Activated T-helper 1 cell treated with anti-CD3 and anti-CD28 coated beads, Interleukin-12 subunit alpha, Interleukin-12 subunit beta, Interleukin-2, Interleukin-4 antibody, amounts not matched to agents 30 ng/mL and 10 ng/mL and 1 ng/mL, durations not matched to agents 14 hours and 24 hours and 36 hours (primary cell): ENCODE measurements at regions of chr9 and their contacts with region 1.

Region 1: DNA sequence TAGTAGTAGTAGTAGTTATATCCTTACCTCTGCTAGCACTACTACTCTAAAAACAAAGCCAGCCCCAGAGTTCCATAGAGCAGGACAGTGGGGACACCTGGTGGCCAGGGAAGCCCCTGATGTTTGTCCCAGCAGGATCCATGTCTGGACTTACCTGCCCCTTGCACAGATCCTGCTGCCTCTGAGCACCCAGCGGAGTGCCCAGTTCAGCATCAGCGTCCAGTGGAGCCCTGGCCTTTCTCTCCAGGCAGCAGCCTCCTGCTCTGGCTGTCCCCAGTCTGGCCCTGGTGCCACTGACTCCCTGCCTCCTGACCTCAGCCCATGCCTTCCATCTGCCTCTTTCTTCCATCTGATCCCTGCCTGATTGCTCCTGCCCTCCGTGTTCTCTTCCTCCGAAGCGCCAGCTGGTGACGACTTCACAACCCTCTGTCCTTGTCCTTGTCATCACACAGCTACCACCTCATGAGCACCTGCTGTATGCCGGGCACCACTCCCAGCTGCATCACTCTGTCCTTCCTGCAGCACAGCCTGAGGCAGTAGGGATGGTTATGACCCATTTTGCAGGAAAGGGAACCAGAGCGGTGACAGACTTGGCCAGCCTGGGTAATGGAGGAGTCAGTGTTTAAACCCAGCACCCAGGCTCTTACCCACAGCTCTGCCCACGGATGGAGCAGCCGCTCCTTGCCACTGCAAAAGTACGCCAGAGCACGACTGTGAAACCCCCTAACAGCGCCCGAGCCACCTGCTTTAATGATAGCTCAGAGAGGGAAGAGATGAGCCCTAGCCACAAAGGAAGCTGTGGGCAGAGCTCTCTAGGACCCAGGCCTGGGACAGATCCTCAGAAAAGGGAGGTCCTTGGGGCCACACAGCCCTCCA is 11.5 kb downstream of the SARDH start:
- DNase-seq: no peak
- H3K4me3 Mint-ChIP-seq: no peak overlapping the region
- H3K27ac Mint-ChIP-seq: no peak overlapping the region
- H3K4me1 Mint-ChIP-seq: no peaks in the 10 kb centered on the region
- H3K27me3 Mint-ChIP-seq: peaks cover 11% of the 10 kb centered on the region

Region 2: GRCh38 chr9:133589454-133590227 is 137.0 kb before region 1 on chr9:
- intact Hi-C with region 1: loop called (anchors 1 kb)
- DNase-seq: peak; percentile 14
- H3K4me3 Mint-ChIP-seq: no peak overlapping the region
- H3K27ac Mint-ChIP-seq: no peak overlapping the region
- H3K4me1 Mint-ChIP-seq: no peaks in the 10 kb centered on the region
- H3K27me3 Mint-ChIP-seq: peaks cover 14% of the 10 kb centered on the region

Region 3: DNA sequence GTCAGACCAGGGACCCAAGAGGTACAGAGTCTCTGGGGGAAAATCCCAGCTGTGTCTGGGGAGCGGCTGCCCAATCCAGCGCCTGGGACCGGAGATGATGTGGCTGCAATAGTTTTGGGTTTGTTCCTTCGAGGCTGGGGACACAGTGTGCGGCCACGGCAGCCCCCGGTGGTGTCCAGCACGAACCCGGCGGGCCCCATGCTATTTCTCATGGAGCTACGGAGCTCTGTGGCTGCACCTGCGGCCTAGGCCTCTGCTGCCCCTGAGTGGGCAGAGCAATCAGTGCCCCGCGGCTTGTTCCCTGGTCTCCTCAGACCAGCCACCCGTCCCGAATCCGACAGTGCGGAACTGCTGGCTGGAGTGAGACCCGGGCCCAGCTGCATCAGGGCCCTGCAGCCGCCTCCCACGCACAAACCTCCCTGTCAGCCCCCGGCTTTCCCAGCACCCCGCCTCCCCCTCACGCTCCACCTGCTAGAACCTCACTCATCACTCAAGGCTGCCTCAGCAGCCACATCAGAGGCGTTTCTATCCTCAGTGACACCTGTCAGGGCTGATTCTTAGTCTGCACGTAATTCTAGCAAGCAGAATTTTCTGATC is 17.5 kb before region 1 on chr9:
- intact Hi-C with region 1: no loop called
- DNase-seq: no peak
- H3K4me3 Mint-ChIP-seq: no peak overlapping the region
- H3K27ac Mint-ChIP-seq: no peak overlapping the region
- H3K4me1 Mint-ChIP-seq: peaks cover 5% of the 10 kb centered on the region
- H3K27me3 Mint-ChIP-seq: peaks cover 5% of the 10 kb centered on the region